ENCODE measurements at regions of chr2 and their contacts with region 1.

Region 1: GRCh38 chr2:3594493-3595281 is at the start of gene COLEC11:
- DNase-seq: peak; percentile 74 to 82 (median 75)
- H3K4me3 ChIP-seq: peak within 1 kb of the TSS; percentile 21
- H3K27ac ChIP-seq: peak within 1 kb of the TSS in 1 of 2 donors; percentile 63
- H3K4me1 ChIP-seq: peaks cover 14% of the 10 kb centered on the region
- H3K27me3 ChIP-seq: no peaks in the 10 kb centered on the region
- CTCF ChIP-seq: peak; percentile 7 to 50 (median 49)
- EP300 ChIP-seq: no peak
- POLR2A ChIP-seq: no peak
- total RNA-seq, gene COLEC11: 16.7 to 99.0 (median 59.9) TPM

Region 2: GRCh38 chr2:3413642-3414493 is 180.8 kb before region 1 on chr2:
- intact Hi-C with region 1: no loop called
- DNase-seq: no peak
- H3K4me3 ChIP-seq: no peak overlapping the region
- H3K27ac ChIP-seq: no peak overlapping the region
- H3K4me1 ChIP-seq: no peaks in the 10 kb centered on the region
- H3K27me3 ChIP-seq: no peaks in the 10 kb centered on the region
- CTCF ChIP-seq: no peak
- EP300 ChIP-seq: no peak
- POLR2A ChIP-seq: no peak

Region 3: GRCh38 chr2:3633089-3633981 is 38.6 kb after region 1 on chr2:
- intact Hi-C with region 1: loop called in 1 of 4 experiments (anchors 5 kb)
- DNase-seq: peak; percentile 65 to 82 (median 73)
- H3K4me3 ChIP-seq: no peak overlapping the region
- H3K27ac ChIP-seq: peak overlapping the region; percentile 22 to 68
- H3K4me1 ChIP-seq: peaks cover 42% of the 10 kb centered on the region
- H3K27me3 ChIP-seq: no peaks in the 10 kb centered on the region
- CTCF ChIP-seq: no peak
- EP300 ChIP-seq: no peak
- POLR2A ChIP-seq: no peak

Region 4: DNA sequence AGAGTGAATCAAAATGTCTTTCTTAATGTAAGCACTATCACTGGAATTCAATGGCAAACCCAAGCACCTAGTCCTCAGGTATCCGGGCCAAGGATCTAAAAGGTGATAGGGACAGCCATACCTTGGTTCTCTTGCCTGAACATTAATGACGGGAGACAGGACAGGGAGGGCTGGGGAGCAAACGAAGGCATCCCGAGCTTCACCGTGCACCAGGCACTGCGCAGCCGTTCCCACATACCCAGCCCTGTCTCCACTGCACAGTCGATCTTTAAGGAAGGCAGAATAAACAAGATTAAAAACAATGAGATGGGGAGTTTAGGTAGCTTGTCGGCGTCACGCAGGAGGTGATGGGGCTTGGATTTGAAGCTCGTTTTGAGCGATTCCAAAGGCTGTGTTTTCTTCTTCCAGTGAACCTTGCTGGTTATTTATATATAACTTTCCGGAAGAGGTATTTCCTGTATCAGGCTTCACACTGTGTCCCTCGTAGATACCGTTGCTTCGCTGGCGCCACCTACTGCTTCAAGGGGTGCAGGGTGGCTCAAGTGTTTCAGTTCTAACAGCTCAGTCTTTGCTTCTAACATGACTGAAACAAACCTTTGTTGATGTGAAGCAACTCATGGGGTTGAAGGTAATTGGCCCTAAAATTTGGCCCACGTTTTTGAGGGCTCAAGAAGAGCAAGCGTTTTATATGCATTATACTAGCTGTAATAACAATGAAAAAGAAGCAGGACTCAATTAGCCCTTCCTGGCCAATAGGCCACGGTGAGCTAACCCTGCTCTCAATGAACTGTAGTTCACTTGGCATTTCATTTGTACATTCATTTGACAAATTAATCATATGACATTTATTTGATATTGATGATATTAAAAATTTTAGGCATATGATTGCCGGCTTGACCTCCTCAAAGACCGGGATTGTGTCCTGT is 186.1 kb after region 1 on chr2:
- intact Hi-C with region 1: no loop called
- DNase-seq: peak; percentile 20 to 70 (median 52)
- H3K4me3 ChIP-seq: no peak overlapping the region
- H3K27ac ChIP-seq: no peak overlapping the region
- H3K4me1 ChIP-seq: no peaks in the 10 kb centered on the region
- H3K27me3 ChIP-seq: no peaks in the 10 kb centered on the region
- CTCF ChIP-seq: peak in 1 of 3 donors; percentile 28
- EP300 ChIP-seq: no peak
- POLR2A ChIP-seq: no peak

Region 5: GRCh38 chr2:3848776-3849175 is 254.1 kb after region 1 on chr2:
- intact Hi-C with region 1: no loop called
- DNase-seq: no peak
- H3K4me3 ChIP-seq: no peak overlapping the region
- H3K27ac ChIP-seq: no peak overlapping the region
- H3K4me1 ChIP-seq: no peaks in the 10 kb centered on the region
- H3K27me3 ChIP-seq: no peaks in the 10 kb centered on the region
- CTCF ChIP-seq: no peak
- EP300 ChIP-seq: no peak
- POLR2A ChIP-seq: no peak

Measured in ovary (tissue), 10 donors.